Natural killer cell (primary cell): ENCODE measurements at regions of chr12 and their contacts with region 1.

Region 1: GRCh38 chr12:116916714-116917114 is 6.0 kb downstream of the FBXW8 start:
- DNase-seq: peak; percentile 69 to 74
- ATAC-seq: peak; percentile 93 to 97 (median 94)
- H3K4me3 ChIP-seq: no peak overlapping the region
- H3K4me3 Mint-ChIP-seq: peak overlapping the region; percentile 69
- H3K27ac ChIP-seq: peak overlapping the region; percentile 37
- H3K27ac Mint-ChIP-seq: peak overlapping the region; percentile 78 to 94
- H3K4me1 ChIP-seq: peaks cover 25% of the 10 kb centered on the region
- H3K4me1 Mint-ChIP-seq: peaks cover 61 to 68% of the 10 kb centered on the region in 2 donors
- H3K27me3 ChIP-seq: no peaks in the 10 kb centered on the region
- H3K27me3 Mint-ChIP-seq: peaks cover 0 to 3% of the 10 kb centered on the region in 2 donors
- CTCF ChIP-seq: peak; percentile 57

Region 2: DNA sequence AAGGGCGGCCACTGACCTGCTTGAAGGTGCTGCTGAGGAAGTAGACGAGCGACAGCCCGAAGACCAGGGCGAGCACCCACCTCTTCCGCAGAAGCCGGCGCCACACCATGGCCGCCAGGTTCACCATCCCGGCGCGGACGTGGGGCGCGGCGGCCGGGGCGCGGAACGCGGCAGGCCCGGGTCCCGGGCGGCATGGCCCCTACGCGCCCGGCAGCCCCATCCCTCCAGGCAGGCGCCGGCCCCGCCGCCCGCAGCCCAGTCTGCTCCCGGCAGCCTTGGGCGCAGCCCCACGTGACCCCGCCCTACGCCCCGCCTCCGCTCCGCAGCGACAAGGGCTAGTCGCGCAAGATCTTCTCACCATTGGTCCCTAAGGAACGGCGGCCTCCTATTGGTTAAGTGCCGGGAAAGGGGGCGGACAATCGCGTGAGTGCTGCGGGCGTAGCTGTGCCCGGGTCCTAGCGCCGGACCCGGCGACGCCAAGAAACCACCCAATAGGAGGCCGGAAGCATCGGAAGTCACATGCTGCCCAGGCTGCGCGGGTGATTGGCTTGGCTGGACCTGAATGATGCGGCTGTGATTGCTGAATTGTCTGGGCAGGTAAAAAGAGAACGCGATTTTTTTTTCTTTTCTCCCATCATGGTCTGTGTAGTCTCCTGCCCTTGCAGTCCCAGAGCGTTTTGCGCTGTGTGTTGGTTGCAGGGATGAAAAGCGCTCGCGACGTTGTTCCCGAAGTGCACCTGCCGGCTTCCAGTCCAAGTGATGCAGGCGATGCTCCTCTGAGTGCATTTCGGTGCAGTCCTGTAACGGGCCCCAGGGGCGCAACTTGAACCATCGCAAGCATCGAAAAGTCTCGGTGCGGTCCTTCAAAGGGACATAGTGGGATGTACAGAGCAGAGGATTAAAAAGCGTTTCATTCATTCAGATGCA is 178.7 kb before region 1 on chr12 and contains the starts of genes RNFT2 and SPRING1:
- intact Hi-C with region 1: loop called (anchors 2 kb)
- DNase-seq: peak; percentile 99
- ATAC-seq: peak; percentile 96 to 99 (median 97)
- H3K4me3 ChIP-seq: peak within 1 kb of the TSS; percentile 62
- H3K4me3 Mint-ChIP-seq: peak within 1 kb of the TSS; percentile 96
- H3K27ac ChIP-seq: no peak within 1 kb of the TSS
- H3K27ac Mint-ChIP-seq: peak within 1 kb of the TSS; percentile 84 to 90
- H3K4me1 ChIP-seq: peaks cover 15% of the 10 kb centered on the region
- H3K4me1 Mint-ChIP-seq: peaks cover 30 to 31% of the 10 kb centered on the region in 2 donors
- H3K27me3 ChIP-seq: no peaks in the 10 kb centered on the region
- H3K27me3 Mint-ChIP-seq: no peaks in the 10 kb centered on the region
- CTCF ChIP-seq: no peak
- total RNA-seq, gene RNFT2: 4.0 to 6.9 (median 5.3) TPM
- total RNA-seq, gene SPRING1: 24.4 to 37.2 (median 30.4) TPM

Region 3: GRCh38 chr12:116818948-116819832 is 97.5 kb before region 1 on chr12:
- intact Hi-C with region 1: loop called (anchors 1 kb)
- DNase-seq: peak; percentile 92 to 96
- ATAC-seq: peak; percentile 86 to 91 (median 90)
- H3K4me3 ChIP-seq: peak overlapping the region; percentile 75
- H3K4me3 Mint-ChIP-seq: peak overlapping the region; percentile 95
- H3K27ac ChIP-seq: peak overlapping the region; percentile 82
- H3K27ac Mint-ChIP-seq: peak overlapping the region; percentile 80 to 94
- H3K4me1 ChIP-seq: peaks cover 15% of the 10 kb centered on the region
- H3K4me1 Mint-ChIP-seq: peaks cover 21 to 22% of the 10 kb centered on the region in 2 donors
- H3K27me3 ChIP-seq: no peaks in the 10 kb centered on the region
- H3K27me3 Mint-ChIP-seq: no peaks in the 10 kb centered on the region
- CTCF ChIP-seq: no peak

Region 4: DNA sequence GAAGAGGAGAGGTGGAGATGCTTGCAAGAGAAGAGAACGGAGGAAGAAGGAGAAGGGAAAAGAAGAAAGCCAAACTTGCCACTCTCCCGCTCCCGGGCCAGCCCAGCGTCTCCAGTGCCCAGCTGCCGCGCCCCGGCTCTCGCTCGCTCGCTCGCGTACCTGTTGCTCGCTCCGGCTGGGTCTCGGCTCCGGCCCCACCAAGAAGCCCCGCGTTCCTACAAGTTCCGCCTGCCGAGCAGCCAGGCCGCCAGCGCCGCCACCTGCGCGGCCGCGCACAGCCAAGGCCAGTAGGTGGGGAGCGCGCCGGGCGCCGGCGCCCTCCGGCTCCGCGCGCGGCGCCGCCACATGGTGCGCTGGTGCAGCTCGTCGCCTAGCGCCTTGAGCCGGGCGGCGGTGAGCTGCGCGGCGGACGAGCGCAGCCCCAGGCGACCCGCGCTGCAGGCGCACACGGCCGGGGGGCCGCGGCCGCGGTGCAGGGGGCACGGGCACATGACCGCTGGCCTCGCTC is 35.8 kb before region 1 on chr12:
- intact Hi-C with region 1: no loop called
- DNase-seq: peak in 1 of 2 donors; percentile 56
- ATAC-seq: peak; percentile 24 to 76 (median 28)
- H3K4me3 ChIP-seq: peak overlapping the region; percentile 12
- H3K4me3 Mint-ChIP-seq: peak overlapping the region; percentile 55
- H3K27ac ChIP-seq: no peak overlapping the region
- H3K27ac Mint-ChIP-seq: no peak overlapping the region
- H3K4me1 ChIP-seq: peaks cover 31% of the 10 kb centered on the region
- H3K4me1 Mint-ChIP-seq: peaks cover 18 to 25% of the 10 kb centered on the region in 2 donors
- H3K27me3 ChIP-seq: peaks cover 46% of the 10 kb centered on the region
- H3K27me3 Mint-ChIP-seq: peaks cover 68 to 83% of the 10 kb centered on the region in 2 donors
- CTCF ChIP-seq: no peak